H1 (cell line): ENCODE measurements at regions of chr1 and their contacts with region 1.

Region 1: DNA sequence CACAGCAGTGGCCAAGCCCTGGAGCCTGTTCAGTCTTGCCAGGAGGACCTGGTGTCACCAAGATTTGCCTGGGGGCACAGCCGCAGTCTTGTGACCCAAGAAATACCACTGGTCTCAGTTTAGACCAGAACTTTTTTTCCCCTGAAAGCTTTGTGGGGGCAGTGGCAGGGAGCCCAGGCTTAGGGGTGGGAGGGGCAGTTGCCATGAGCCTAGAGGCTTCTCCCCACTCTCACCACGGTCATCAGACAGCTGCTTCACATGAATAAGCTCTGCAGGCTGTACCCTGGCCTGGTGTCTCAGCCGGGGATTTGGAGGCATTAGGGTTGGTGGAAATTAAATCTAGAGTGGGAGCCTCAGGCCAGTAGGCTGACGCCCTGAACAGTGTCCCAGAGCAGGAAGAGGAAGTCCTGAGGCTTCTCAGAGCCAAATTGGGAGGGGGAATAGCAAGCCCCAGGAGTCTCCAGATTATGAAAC is 73.7 kb downstream of the SLC16A1 start:
- DNase-seq: no peak
- H3K4me3 ChIP-seq: no peak overlapping the region
- H3K27ac ChIP-seq: no peak overlapping the region
- H3K4me1 ChIP-seq: peaks cover 0 to 14% (median 5%) of the 10 kb centered on the region in 4 experiments; a peak in 4 of 7 replicates
- H3K27me3 ChIP-seq: no peaks in the 10 kb centered on the region
- CTCF ChIP-seq: no peak
- EP300 ChIP-seq: no peak
- POLR2A ChIP-seq: no peak
- RAD21 ChIP-seq: no peak

Region 2: GRCh38 chr1:112904071-112904830 is 21.9 kb after region 1 on chr1:
- CTCF ChIA-PET with region 1: interaction called, 9 read pairs
- POLR2A ChIA-PET with region 1: interaction called, 38 read pairs
- DNase-seq: peak in 1 of 2 experiments; percentile 44
- H3K4me3 ChIP-seq: no peak overlapping the region
- H3K27ac ChIP-seq: no peak overlapping the region
- H3K4me1 ChIP-seq: peaks cover 2 to 19% (median 8%) of the 10 kb centered on the region in 4 experiments; a peak in 4 of 7 replicates
- H3K27me3 ChIP-seq: no peaks in the 10 kb centered on the region
- CTCF ChIP-seq: no peak
- EP300 ChIP-seq: no peak
- POLR2A ChIP-seq: no peak
- RAD21 ChIP-seq: no peak

Region 3: GRCh38 chr1:112911506-112911905 is 29.2 kb after region 1 on chr1:
- CTCF ChIA-PET with region 1: interaction called, 13 read pairs
- POLR2A ChIA-PET with region 1: interaction called, 38 read pairs
- DNase-seq: peak in 1 of 2 experiments; percentile 53
- H3K4me3 ChIP-seq: no peak overlapping the region; a peak in 1 of 8 replicates
- H3K27ac ChIP-seq: no peak overlapping the region
- H3K4me1 ChIP-seq: peaks cover 0 to 23% (median 19%) of the 10 kb centered on the region in 4 experiments; a peak in 6 of 7 replicates
- H3K27me3 ChIP-seq: no peaks in the 10 kb centered on the region
- CTCF ChIP-seq: no peak
- EP300 ChIP-seq: no peak
- POLR2A ChIP-seq: no peak
- RAD21 ChIP-seq: no peak

Region 4: DNA sequence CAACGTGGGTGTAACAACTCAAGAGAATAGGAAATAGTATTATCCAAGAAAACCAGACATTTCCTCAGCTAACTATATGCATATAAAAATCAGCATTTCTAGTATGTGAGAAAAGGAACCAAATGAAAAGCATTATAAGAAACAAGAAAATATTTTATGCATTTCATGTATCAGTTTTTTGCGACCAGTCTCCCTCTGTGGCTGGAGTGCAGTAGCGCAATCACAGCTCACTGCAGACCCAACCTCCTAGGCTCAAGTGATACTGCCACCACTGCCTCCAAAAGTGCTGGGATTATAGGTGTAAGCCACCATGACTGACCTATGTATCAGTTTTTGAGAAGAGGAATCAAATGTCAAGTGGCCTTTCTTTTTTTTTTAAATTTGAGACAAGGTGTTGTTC is 42.7 kb after region 1 on chr1:
- CTCF ChIA-PET with region 1: interaction called, 13 read pairs
- POLR2A ChIA-PET with region 1: interaction called, 3 read pairs
- DNase-seq: no peak
- H3K4me3 ChIP-seq: no peak overlapping the region
- H3K27ac ChIP-seq: no peak overlapping the region
- H3K4me1 ChIP-seq: no peaks in the 10 kb centered on the region; a peak in 1 of 7 replicates
- H3K27me3 ChIP-seq: no peaks in the 10 kb centered on the region
- CTCF ChIP-seq: peak in 1 of 3 experiments; percentile 2; a peak in 1 of 4 replicates
- EP300 ChIP-seq: no peak
- POLR2A ChIP-seq: no peak
- RAD21 ChIP-seq: no peak

Region 5: DNA sequence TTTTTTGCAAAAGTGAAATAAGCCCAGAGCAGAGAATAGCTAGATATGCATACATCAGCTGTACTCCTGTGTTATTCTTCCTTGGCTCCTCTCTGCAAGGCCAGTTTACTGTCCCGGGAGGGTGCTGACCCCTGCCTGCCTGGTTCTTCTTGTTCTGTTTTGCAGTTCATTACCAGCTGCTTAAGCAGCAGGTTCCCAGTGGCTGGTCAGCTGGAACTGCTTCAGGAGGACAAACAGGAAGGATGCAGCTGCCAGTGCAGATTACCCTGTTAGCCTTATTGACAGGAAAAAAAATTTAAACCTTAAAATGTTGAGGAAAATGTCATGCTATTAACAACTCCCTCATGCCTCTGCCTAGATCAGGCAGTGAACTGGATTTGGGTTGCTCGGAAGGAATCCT is 174.7 kb after region 1 on chr1:
- CTCF ChIA-PET with region 1: interaction called, 15 read pairs
- POLR2A ChIA-PET with region 1: no interaction called
- DNase-seq: no peak
- H3K4me3 ChIP-seq: no peak overlapping the region
- H3K27ac ChIP-seq: peak overlapping the region; percentile 27; the same call in 1 of the 2 replicates
- H3K4me1 ChIP-seq: peaks cover 3 to 13% (median 11%) of the 10 kb centered on the region in 4 experiments; a peak in 4 of 7 replicates
- H3K27me3 ChIP-seq: no peaks in the 10 kb centered on the region
- CTCF ChIP-seq: peak; percentile 9 to 15 (median 12); a peak in 3 of 4 replicates
- EP300 ChIP-seq: no peak
- POLR2A ChIP-seq: no peak
- RAD21 ChIP-seq: peak in 1 of 2 experiments; percentile 42; a peak in 2 of 4 replicates